ENCODE measurements at regions of chr11 and their contacts with region 1.

Region 1: DNA sequence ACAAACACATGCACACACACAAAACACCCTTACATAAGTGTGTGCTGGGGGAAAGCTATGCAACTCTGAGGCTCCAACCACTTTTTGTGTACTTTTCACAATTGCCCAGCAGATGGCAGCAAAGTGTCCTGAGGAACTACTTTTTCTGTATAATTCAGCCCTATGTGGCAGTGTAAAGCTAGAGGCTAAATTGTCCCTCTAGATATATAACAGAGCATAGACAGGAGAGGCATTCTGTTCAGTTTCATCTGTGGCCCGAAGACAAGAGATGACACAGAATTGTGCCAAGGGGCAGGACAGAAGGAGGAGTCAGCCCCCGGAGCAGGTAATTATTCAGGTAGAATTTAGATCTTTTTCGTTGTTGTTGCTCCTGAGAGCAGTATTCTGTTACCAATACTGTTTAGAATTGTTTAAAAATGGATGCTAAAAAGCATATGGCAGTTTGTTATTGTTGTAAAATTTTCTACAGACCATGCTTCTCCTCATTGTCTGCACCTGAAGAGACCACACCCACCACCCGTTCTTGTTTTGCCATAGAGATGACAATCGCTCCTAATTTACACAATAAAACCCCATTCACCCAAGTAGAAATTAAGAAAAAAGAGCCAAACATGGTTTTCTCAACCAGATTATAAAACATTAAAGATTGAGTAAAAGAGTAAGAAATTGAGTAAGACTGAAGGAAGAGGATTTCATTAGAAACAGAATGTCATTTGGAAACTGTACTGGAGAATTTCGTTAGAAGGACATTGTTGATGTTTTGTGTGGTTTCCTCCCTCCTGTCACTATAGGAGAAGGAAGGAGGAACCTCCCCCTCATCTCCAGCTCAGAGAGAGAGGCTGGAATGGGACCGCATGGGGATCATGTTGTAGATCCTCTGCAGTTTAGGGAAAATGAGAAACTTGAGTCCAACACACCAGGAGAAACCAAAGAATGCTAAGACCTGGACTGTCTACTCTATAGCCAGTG is 14.5 kb upstream of the MS4A7 start:
- DNase-seq: peak; percentile 42
- ATAC-seq: peak; percentile 93
- H3K4me3 ChIP-seq: no peak overlapping the region
- H3K27ac ChIP-seq: no peak overlapping the region
- H3K4me1 ChIP-seq: no peaks in the 10 kb centered on the region
- H3K27me3 ChIP-seq: peaks cover 7% of the 10 kb centered on the region; the same call in 1 of the 2 replicates
- CTCF ChIP-seq: peak; percentile 72 to 78 (median 75); a peak in 5 of 6 replicates
- POLR2A ChIP-seq: no peak
- RAD21 ChIP-seq: peak; percentile 72

Region 2: DNA sequence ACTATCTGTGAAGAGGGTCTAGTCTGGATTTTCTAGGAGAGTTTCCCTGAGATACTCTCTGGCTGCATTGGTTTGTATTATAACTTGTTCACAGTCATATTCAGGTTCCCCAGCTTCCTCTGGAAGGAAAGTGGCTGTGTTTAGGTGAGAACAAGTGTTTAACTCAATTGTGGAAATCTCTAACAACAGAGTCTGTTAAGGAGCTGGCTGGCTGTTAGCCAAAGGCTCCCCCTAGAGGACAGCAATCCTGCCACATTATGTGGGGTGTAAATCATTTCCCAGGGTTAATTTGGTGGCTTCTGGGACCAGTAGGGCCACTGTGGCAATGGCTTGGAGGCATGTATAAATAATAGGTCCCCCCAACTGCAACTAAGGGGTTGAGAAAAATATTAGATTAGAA is 18.3 kb before region 1 on chr11:
- CTCF ChIA-PET with region 1: interaction called, 12 read pairs
- POLR2A ChIA-PET with region 1: no interaction called
- RAD21 ChIA-PET with region 1: no interaction called
- intact Hi-C with region 1: no loop called
- DNase-seq: peak; percentile 21
- ATAC-seq: peak; percentile 78
- H3K4me3 ChIP-seq: no peak overlapping the region
- H3K27ac ChIP-seq: no peak overlapping the region
- H3K4me1 ChIP-seq: no peaks in the 10 kb centered on the region
- H3K27me3 ChIP-seq: no peaks in the 10 kb centered on the region; the same call in 1 of the 2 replicates
- CTCF ChIP-seq: peak; percentile 41 to 76 (median 75); a peak in 5 of 6 replicates
- POLR2A ChIP-seq: no peak
- RAD21 ChIP-seq: peak; percentile 39

Region 3: DNA sequence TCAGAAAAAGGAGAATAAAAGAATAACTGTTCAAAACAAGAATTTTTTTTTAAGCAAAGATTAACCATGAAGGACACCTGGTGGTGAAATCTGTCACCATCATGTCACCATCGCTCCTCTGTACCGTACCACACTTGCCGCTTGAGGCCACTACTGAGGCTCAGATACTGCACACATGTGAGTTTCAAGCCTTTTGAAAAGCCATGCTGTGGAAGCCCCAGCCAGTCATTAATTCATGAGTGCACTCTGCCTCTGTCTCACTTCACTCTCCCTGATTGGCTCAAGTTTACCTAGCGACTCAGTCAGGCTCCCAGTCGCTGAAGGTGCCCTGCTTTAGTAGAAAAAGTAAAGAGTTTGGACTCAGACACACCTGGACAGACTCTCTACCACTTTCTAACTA is 122.2 kb after region 1 on chr11:
- CTCF ChIA-PET with region 1: interaction called, 6 read pairs
- POLR2A ChIA-PET with region 1: no interaction called
- RAD21 ChIA-PET with region 1: no interaction called
- intact Hi-C with region 1: loop called (anchors 1 kb)
- DNase-seq: peak; percentile 79
- ATAC-seq: peak; percentile 100
- H3K4me3 ChIP-seq: no peak overlapping the region
- H3K27ac ChIP-seq: no peak overlapping the region
- H3K4me1 ChIP-seq: peaks cover 0 to 2% of the 10 kb centered on the region in 2 experiments; a peak in 1 of 4 replicates
- H3K27me3 ChIP-seq: no peaks in the 10 kb centered on the region
- CTCF ChIP-seq: peak; percentile 85 to 98 (median 90)
- POLR2A ChIP-seq: no peak
- RAD21 ChIP-seq: peak; percentile 74

Region 4: DNA sequence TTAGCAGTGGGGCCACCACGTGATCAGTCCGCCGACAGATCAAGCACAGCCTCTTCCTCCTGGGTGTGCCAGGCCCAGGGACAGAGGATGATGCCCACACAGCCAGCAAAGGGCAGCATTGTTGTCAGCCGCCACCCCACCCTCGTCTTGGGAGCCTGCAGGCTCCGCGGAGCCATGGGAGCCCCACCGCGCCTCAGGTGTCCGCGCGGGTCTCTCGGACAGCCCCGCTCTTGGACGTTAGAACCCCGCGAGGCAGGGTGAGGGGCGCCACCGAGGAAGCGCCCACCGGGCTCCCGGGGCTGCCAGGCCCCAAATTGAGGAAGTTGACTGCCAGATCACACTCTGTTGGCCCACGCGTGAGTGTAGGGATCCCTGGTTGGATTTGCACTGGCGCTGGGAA is 251.7 kb after region 1 on chr11:
- CTCF ChIA-PET with region 1: interaction called, 28 read pairs
- POLR2A ChIA-PET with region 1: interaction called, 3 read pairs
- RAD21 ChIA-PET with region 1: interaction called, 5 to 6 read pairs
- intact Hi-C with region 1: loop called (anchors 1 kb)
- DNase-seq: no peak
- ATAC-seq: no peak
- H3K4me3 ChIP-seq: no peak overlapping the region
- H3K27ac ChIP-seq: no peak overlapping the region
- H3K4me1 ChIP-seq: peaks cover 0 to 6% of the 10 kb centered on the region in 2 experiments; a peak in 2 of 4 replicates
- H3K27me3 ChIP-seq: no peaks in the 10 kb centered on the region
- CTCF ChIP-seq: no peak
- POLR2A ChIP-seq: no peak
- RAD21 ChIP-seq: no peak

Region 5: DNA sequence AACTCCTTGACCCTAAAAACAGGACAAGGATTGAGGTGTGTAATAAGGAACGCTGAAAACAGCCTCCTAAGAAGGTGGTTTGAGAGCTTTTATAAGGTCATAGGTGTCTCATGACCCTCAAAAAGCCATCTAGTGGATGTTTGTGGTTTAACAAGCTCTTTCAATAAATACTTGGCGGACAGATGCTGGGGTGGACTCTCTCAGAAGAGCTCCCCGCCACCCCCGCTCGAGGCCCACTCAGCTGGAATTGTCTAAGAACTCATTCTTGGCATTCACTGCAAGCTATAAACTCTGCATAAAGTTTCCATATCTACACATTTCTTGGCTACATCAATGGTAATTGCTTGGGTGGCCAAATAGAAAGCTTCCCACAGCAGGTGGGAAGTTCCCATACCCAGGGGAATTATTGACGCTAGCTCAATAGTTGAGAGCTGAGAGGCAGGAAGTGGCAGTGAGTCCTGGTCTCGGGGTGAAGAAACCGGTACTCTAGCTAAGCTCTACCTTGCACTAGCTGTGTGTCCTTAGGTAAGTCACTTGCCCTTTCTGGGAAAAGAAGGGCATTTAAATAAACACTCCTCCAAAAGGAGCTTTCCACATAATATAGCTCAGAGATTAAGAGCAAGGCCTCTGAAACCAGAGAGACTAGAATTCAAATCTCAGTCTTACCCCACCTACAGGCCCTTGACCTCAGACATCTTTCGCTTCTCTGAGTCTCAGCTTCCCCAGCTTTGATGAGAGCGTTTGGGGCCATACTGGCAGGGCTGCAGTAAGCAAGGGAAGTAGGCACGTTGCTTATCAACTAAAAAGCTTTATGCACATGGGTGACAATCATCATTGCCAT is 399.2 kb after region 1 on chr11:
- CTCF ChIA-PET with region 1: interaction called, 11 read pairs
- POLR2A ChIA-PET with region 1: no interaction called
- RAD21 ChIA-PET with region 1: no interaction called
- intact Hi-C with region 1: no loop called
- DNase-seq: peak; percentile 7
- ATAC-seq: peak; percentile 49
- H3K4me3 ChIP-seq: no peak overlapping the region
- H3K27ac ChIP-seq: no peak overlapping the region
- H3K4me1 ChIP-seq: peaks cover 8 to 10% of the 10 kb centered on the region in 2 experiments; a peak in 2 of 4 replicates
- H3K27me3 ChIP-seq: 0 out of 2 replicates have a peak, but pooled peaks cover 5% of the 10 kb centered on the region
- CTCF ChIP-seq: peak; percentile 34 to 59 (median 47); a peak in 5 of 6 replicates
- POLR2A ChIP-seq: no peak
- RAD21 ChIP-seq: peak; percentile 21; the same call in 1 of the 2 replicates

Measured in HCT116 (cell line).